HCT116 (cell line): ENCODE measurements at regions of chr7 and their contacts with region 1.

Region 1: DNA sequence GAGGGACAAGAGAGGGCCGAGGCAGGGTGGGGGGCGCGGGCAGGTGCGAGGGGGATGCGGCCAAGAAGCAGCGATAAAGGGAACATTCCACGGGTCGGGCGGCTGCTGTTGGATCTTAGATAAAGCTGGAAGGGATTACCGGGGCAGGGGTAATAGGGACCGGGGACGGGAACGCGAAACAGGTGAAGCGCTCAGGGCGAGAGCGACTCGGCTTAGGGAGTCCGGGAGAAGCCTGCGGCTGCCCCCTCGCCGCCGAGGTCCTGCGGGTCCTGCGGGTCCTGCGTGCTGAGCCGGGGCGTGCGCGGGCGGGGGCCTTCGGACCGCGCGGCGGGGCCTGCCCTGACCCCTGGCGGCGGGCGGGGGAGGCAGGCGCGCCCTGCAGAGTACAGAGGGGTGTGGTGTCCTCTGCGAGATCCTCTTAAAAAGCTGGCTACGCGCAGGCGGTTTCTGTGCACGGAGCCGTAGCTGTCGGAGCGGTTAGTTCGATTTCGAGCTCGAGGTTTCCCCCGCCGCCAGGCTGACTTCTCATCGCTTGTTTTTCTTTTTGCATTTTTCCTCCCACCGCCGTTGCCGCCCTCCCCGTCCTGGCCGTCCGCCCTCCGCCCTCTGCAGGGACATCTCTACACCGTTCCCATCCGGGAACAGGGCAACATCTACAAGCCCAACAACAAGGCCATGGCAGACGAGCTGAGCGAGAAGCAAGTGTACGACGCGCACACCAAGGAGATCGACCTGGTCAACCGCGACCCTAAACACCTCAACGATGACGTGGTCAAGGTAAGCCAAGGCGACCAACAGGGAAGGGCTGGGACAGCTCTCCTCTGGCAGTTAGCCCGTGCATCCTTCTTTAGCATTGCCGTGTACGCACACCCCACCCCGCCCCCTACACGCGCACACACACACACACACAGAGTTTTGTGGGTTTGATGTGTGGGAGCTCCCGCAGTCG is 1.4 kb downstream of the CAV1 start:
- DNase-seq: no peak
- ATAC-seq: peak; percentile 68
- H3K4me3 ChIP-seq: peak overlapping the region; percentile 84 to 89
- H3K27ac ChIP-seq: peak overlapping the region; percentile 100
- H3K4me1 ChIP-seq: peaks cover 47 to 79% of the 10 kb centered on the region in 2 experiments
- H3K27me3 ChIP-seq: no peaks in the 10 kb centered on the region
- CTCF ChIP-seq: peak in 2 of 3 experiments; percentile 68 to 78; a peak in 4 of 6 replicates
- POLR2A ChIP-seq: peak; percentile 67
- RAD21 ChIP-seq: no peak

Region 2: DNA sequence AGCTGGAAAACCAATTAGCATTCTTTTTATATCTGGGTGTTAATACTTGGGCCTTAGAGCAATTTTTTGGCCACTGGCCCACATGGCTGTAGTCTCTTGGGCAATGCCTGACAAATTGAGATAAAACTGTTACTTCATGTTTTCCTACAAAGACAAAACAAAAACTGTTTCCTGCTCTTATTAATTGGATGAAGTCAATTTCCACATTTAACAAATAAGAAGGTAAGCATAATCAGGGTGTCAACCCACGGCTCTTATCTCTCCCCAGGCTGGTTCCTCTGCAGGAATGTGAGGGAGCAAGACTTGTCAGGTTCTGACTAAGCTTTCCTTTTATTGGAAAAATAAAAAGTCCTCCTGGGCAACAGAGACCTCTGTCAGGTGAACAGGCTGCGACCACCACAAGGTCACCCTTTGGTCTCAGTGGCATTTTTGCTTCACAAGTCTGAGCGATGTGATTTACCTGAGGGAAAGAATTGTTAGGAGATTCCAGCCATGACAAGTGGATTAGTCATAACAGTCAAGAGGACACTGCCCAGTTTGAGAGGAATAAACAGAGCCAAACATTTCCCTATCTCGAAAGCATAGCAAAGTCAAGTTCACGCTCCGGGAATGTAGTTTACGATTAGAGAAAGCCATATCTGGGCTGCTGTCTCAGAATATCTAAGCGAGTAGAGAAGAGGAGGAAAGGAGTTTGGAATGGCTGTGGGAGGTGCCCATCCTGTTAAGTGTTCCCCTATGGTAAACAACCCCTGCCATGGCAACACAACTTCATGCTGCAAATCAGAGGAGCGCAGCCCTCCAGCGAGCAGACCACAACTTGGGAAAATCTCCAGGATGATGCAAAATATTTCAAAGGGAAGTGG is 171.4 kb before region 1 on chr7:
- CTCF ChIA-PET with region 1: no interaction called
- POLR2A ChIA-PET with region 1: no interaction called
- RAD21 ChIA-PET with region 1: no interaction called
- intact Hi-C with region 1: loop called (anchors 2 kb)
- DNase-seq: peak; percentile 96
- ATAC-seq: peak; percentile 75
- H3K4me3 ChIP-seq: peak overlapping the region; percentile 15 to 41
- H3K27ac ChIP-seq: peak overlapping the region; percentile 89
- H3K4me1 ChIP-seq: peaks cover 61 to 66% of the 10 kb centered on the region in 2 experiments
- H3K27me3 ChIP-seq: no peaks in the 10 kb centered on the region
- CTCF ChIP-seq: no peak
- POLR2A ChIP-seq: no peak
- RAD21 ChIP-seq: 0 out of 2 replicates have a peak, but pooled peaks have one; percentile 11

Region 3: DNA sequence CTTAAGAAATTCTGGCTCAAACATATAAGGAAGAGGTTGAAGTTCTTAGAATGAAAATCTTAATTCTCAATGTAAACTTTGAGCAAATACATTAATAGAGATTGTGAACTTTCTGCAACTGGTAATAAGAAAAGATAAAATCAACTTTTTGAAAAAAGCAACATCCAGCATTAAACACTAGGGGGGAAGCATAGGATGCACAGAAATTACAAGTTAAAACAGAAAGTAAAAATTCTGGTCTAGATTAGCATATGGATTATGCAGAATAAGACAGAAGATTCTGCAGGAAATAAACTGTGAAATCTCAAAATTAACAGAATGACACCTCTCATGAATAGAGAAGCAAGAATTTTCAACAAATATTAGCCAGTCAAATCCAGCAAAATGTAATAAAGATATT is 64.7 kb before region 1 on chr7:
- CTCF ChIA-PET with region 1: interaction called, 3 read pairs
- POLR2A ChIA-PET with region 1: interaction called, 3 read pairs
- RAD21 ChIA-PET with region 1: no interaction called
- intact Hi-C with region 1: loop called (anchors 5 kb)
- DNase-seq: no peak
- ATAC-seq: no peak
- H3K4me3 ChIP-seq: peak overlapping the region; percentile 15 to 30; a peak in 2 of 4 replicates
- H3K27ac ChIP-seq: peak overlapping the region; percentile 88; the same call in 1 of the 2 replicates
- H3K4me1 ChIP-seq: peaks cover 44 to 82% of the 10 kb centered on the region in 2 experiments
- H3K27me3 ChIP-seq: no peaks in the 10 kb centered on the region
- CTCF ChIP-seq: peak in 2 of 3 experiments; percentile 13 to 41; a peak in 3 of 6 replicates
- POLR2A ChIP-seq: no peak
- RAD21 ChIP-seq: no peak; the same call in 1 of the 2 replicates

Region 4: GRCh38 chr7:116511552-116512519 is 14.4 kb before region 1 on chr7:
- CTCF ChIA-PET with region 1: interaction called, 7 read pairs
- POLR2A ChIA-PET with region 1: interaction called, 12 read pairs
- RAD21 ChIA-PET with region 1: no interaction called
- intact Hi-C with region 1: loop called (anchors 1 kb)
- DNase-seq: peak; percentile 85
- ATAC-seq: peak; percentile 71
- H3K4me3 ChIP-seq: peak overlapping the region; percentile 41 to 48
- H3K27ac ChIP-seq: peak overlapping the region; percentile 96
- H3K4me1 ChIP-seq: peaks cover 51 to 78% of the 10 kb centered on the region in 2 experiments
- H3K27me3 ChIP-seq: no peaks in the 10 kb centered on the region
- CTCF ChIP-seq: no peak
- POLR2A ChIP-seq: no peak
- RAD21 ChIP-seq: no peak

Region 5: GRCh38 chr7:116809636-116810266 is 283.6 kb after region 1 on chr7:
- CTCF ChIA-PET with region 1: no interaction called
- POLR2A ChIA-PET with region 1: no interaction called
- RAD21 ChIA-PET with region 1: no interaction called
- intact Hi-C with region 1: loop called (anchors 5 kb)
- DNase-seq: peak; percentile 67
- ATAC-seq: peak; percentile 81
- H3K4me3 ChIP-seq: no peak overlapping the region
- H3K27ac ChIP-seq: peak overlapping the region; percentile 64
- H3K4me1 ChIP-seq: peaks cover 43 to 48% of the 10 kb centered on the region in 2 experiments
- H3K27me3 ChIP-seq: no peaks in the 10 kb centered on the region
- CTCF ChIP-seq: peak; percentile 43 to 86 (median 76); a peak in 4 of 6 replicates
- POLR2A ChIP-seq: no peak
- RAD21 ChIP-seq: peak; percentile 94